Activated CD4-positive, alpha-beta T cell treated with anti-CD3 and anti-CD28 coated beads for 36 hours (primary cell): ENCODE measurements at regions of chr2 and their contacts with region 1.

Region 1: DNA sequence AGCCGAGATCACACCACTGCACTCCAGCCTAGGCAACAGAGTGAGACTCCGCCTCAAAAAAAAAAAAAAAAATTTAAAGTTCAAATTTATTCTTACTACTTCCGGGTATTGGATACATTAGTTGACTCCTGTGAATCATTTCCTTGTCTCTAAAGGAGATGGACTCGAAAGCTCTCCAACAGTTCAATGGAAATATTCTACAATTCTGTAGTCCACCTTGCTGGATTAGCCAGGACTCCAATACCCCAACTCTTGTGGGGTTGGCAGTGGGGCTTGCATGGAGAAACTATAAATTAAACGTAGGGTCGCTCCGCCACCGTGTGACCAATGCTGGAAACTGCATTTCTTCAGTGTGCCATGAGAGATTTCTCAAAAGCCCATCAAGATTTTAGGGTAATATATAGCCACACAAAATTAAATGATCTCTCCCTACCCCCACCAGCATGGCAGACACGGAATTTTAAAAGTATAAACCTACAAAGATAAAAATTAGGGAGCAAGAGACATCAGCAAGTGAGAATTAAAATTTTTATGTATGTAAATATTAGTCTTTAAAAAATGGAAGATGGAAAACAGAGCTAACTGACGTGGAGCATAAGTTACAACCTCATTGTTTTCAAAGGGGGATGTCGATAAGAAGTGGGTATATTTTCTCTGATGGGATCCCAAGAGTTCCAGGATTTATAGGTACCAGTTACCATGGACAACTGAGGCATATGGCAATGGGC is 27.8 kb upstream of the GAREM2 start:
- DNase-seq: peak; percentile 80
- ATAC-seq: peak; percentile 76
- H3K4me3 Mint-ChIP-seq: no peak overlapping the region
- H3K27ac Mint-ChIP-seq: no peak overlapping the region
- H3K4me1 Mint-ChIP-seq: no peaks in the 10 kb centered on the region
- H3K27me3 Mint-ChIP-seq: peaks cover 10% of the 10 kb centered on the region

Region 2: DNA sequence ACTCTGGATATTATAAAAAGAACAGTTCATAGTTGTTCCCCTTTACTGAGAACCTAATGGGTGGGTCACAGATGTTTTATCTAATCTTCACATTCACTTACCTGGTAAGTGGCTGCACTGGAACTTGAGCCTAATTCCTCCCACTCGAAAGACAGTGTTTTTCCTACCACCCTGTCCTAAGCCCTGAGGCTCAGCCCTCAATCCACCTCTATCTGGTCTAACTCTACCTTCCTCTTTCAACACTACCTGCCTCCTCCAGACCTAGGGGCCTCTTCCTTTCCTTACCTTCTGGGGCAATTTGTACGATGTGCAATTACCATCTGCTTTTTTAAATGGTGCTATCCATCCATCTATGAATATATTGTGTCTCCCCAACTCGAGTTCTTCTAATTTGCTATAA is 153.2 kb before region 1 on chr2:
- CTCF ChIA-PET with region 1: interaction called, 56 read pairs
- POLR2A ChIA-PET with region 1: no interaction called
- intact Hi-C with region 1: loop called (anchors 1 kb)
- DNase-seq: no peak
- ATAC-seq: peak; percentile 33
- H3K4me3 Mint-ChIP-seq: no peak overlapping the region
- H3K27ac Mint-ChIP-seq: no peak overlapping the region
- H3K4me1 Mint-ChIP-seq: peaks cover 8% of the 10 kb centered on the region
- H3K27me3 Mint-ChIP-seq: no peaks in the 10 kb centered on the region